Dendritic cell treated with granulocyte-macrophage colony-stimulating factor and Interleukin-4, amounts not matched to agents 40 ng/mL and 50 ng/mL, for 4 days (primary cell): ENCODE measurements at regions of chr1 and their contacts with region 1.

Region 1: DNA sequence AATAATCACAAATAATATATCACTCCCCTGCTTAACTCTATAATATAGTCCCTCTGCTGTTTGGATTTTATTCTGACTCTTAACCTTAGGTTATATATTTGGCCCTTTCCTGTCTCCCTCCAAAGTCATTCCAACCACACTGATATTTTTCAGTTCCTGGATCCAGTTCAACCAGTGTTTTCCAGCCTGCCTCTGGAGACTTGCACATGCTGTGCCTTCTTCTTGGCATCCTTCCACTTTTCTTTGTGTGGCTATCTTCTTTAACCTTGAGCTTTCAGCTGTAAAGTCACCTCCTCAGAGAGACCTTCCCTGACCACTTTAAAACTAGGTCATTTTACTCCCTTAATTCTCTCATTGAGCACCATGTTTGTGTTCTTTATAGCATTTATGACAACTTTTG is 19.4 kb downstream of the CERS2 start:
- H3K4me3 Mint-ChIP-seq: no peak overlapping the region
- H3K27ac Mint-ChIP-seq: no peak overlapping the region
- H3K4me1 Mint-ChIP-seq: no peaks in the 10 kb centered on the region
- H3K27me3 Mint-ChIP-seq: no peaks in the 10 kb centered on the region

Region 2: DNA sequence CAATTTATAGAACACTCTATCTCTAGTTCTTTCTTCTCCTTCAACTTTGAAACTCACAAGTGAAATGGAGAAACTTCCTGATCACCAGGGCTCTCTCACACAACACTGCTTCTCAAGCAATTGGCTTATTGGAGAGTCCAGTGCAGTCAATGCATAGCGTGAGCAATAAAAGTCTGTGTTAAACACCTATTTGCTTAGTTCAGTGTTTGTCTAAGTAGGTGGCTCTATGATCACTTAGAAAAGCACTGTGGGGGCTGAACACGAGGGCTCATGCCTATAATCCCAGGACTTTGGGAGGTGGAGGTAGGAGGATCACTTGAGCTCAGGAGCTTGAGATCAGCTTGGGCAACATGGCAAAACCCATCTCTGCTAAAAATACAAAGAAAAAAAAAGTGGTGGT is 201.9 kb before region 1 on chr1:
- intact Hi-C with region 1: loop called (anchors 10 kb)
- H3K4me3 Mint-ChIP-seq: no peak overlapping the region
- H3K27ac Mint-ChIP-seq: no peak overlapping the region
- H3K4me1 Mint-ChIP-seq: peaks cover 18% of the 10 kb centered on the region
- H3K27me3 Mint-ChIP-seq: no peaks in the 10 kb centered on the region

Region 3: GRCh38 chr1:150881331-150882070 is 73.8 kb before region 1 on chr1:
- intact Hi-C with region 1: no loop called
- H3K4me3 Mint-ChIP-seq: no peak overlapping the region
- H3K27ac Mint-ChIP-seq: no peak overlapping the region
- H3K4me1 Mint-ChIP-seq: peaks cover 18% of the 10 kb centered on the region
- H3K27me3 Mint-ChIP-seq: no peaks in the 10 kb centered on the region